Prostate gland (tissue), 2 donors: ENCODE measurements at regions of chr11 and their contacts with region 1.

Region 1: DNA sequence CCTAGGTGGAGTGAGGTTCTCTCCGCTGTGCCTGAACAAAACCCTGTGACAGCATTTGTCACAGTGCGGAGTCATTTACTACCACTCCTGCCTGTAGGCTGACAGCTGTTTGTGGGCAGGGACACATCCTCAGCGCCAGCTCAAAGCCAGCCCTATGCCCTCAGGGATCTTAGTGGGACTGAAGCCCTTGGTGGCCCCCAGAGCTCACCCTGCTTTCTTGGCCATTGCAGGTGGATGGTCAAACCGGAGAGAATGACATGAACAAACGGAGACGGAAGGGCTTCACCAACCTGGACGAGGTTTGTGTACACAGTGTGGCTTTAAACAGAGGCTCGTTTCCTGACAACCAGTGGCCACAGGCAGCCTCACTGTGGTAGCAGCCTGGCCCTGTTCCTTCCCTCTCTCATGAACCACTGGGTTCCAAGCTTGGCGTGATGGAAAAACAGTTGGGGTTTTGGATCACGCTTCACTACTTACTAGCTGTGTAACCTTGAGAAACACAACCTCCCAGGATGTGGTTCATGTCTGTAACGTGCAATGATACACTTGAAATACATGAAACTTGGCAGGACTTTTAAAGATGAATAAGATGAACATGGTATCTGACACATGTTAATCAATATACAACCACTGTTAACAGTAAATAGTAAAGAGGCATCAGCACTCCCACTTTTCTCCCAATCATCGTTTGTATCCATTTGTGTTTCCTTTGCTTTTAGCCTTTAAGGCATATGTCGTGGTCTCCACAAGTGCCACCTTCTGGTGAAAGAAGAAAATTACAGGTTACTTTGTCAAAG is 125.8 kb downstream of the MICAL2 start:
- DNase-seq: peak; percentile 25
- H3K4me3 ChIP-seq: no peak overlapping the region
- H3K27ac ChIP-seq: peak overlapping the region; percentile 1 to 24
- H3K4me1 ChIP-seq: peaks cover 5% of the 10 kb centered on the region
- H3K27me3 ChIP-seq: no peaks in the 10 kb centered on the region
- CTCF ChIP-seq: peak; percentile 46 to 85 (median 77)
- POLR2A ChIP-seq: no peak

Region 2: DNA sequence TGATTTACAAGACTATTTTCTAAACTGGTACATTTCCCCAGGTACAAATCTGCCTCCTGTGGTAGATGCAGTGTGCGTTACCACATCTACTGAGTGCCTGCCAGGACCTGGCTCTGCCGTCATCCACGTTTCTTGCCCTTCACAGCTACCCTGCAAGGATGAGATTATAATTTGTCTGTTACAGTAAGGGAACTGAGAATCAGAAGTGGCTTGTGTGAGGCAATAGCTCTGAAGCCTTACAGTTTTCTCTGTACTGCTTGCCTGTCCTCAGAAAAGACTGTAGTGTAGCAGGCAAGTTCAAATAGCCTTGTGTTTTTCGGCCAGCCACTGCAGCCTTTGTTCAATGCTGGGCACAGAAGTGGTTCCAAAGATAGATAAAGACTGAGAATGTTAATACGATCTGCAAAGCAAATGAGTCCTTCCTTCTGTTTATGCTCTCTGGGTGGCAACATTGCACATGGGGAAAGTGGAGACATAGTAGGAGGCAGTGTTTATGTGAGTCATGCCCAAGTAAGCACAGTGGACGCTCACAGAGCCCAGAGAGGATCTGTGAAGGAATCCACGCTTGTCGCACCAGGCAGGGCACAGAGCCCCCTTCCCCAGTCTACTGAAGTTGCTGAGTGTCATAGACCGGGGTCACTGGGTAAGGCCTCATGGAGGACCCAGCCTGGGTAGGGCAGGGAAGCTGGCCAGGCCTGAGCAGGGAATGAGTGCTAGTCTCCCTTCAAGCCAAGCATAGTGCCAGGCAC is 76.6 kb before region 1 on chr11:
- intact Hi-C with region 1: loop called (anchors 2 kb)
- DNase-seq: no peak
- H3K4me3 ChIP-seq: no peak overlapping the region
- H3K27ac ChIP-seq: peak overlapping the region; percentile 35 to 45
- H3K4me1 ChIP-seq: no peaks in the 10 kb centered on the region
- H3K27me3 ChIP-seq: no peaks in the 10 kb centered on the region
- CTCF ChIP-seq: no peak
- POLR2A ChIP-seq: no peak

Region 3: GRCh38 chr11:12182676-12183541 is 53.2 kb before region 1 on chr11:
- intact Hi-C with region 1: no loop called
- DNase-seq: no peak
- H3K4me3 ChIP-seq: no peak overlapping the region
- H3K27ac ChIP-seq: no peak overlapping the region
- H3K4me1 ChIP-seq: no peaks in the 10 kb centered on the region
- H3K27me3 ChIP-seq: no peaks in the 10 kb centered on the region
- CTCF ChIP-seq: no peak
- POLR2A ChIP-seq: no peak